Sigmoid colon (tissue), 7 donors: ENCODE measurements at regions of chr4 and their contacts with region 1.

Region 1: DNA sequence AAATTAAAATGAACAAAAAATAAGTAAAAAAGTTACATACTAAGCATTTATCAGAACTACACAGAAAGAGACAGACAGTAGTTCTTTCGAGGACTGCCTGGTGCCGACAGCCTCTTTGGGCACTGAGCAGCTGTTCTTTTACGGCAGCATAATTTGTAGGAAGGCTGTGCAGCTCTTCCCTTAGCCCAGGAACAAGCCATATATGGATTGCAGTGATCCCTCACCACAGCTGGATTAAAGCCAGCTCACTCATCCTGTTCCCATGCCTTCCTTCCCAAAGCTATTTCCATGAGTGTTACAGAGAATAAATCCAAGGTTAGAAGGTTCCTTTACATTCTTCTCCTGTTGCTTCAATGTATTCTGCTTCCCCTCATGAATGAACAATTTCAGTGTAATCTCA is 71.7 kb downstream of the DDX60L start:
- DNase-seq: peak; percentile 91
- H3K4me3 ChIP-seq: no peak overlapping the region
- H3K27ac ChIP-seq: peak overlapping the region; percentile 70 to 86 (median 82)
- H3K4me1 ChIP-seq: peaks cover 0 to 33% (median 21%) of the 10 kb centered on the region in 4 donors
- H3K27me3 ChIP-seq: no peaks in the 10 kb centered on the region
- CTCF ChIP-seq: no peak
- EP300 ChIP-seq: peak in 2 of 4 donors; percentile 30 to 64
- POLR2A ChIP-seq: no peak

Region 2: GRCh38 chr4:168480931-168481611 is 72.5 kb after region 1 on chr4:
- intact Hi-C with region 1: loop called (anchors 5 kb)
- DNase-seq: peak; percentile 65
- H3K4me3 ChIP-seq: peak overlapping the region; percentile 60 to 79 (median 72)
- H3K27ac ChIP-seq: peak overlapping the region; percentile 88 to 95 (median 90)
- H3K4me1 ChIP-seq: peaks cover 0 to 15% (median 5%) of the 10 kb centered on the region in 4 donors
- H3K27me3 ChIP-seq: no peaks in the 10 kb centered on the region
- CTCF ChIP-seq: no peak
- EP300 ChIP-seq: no peak
- POLR2A ChIP-seq: no peak